CD8-positive, alpha-beta T cell (primary cell): ENCODE measurements at regions of chr7 and their contacts with region 1.

Region 1: GRCh38 chr7:95434557-95435421 is at the start of gene PON2:
- DNase-seq: peak; percentile 9 to 74 (median 37)
- ATAC-seq: peak; percentile 78
- H3K4me3 ChIP-seq: peak within 1 kb of the TSS; percentile 59 to 75
- H3K4me3 Mint-ChIP-seq: peak within 1 kb of the TSS; percentile 90
- H3K27ac ChIP-seq: peak within 1 kb of the TSS; percentile 41 to 53
- H3K27ac Mint-ChIP-seq: peak within 1 kb of the TSS; percentile 90
- H3K4me1 ChIP-seq: peaks cover 8% of the 10 kb centered on the region
- H3K4me1 Mint-ChIP-seq: peaks cover 21% of the 10 kb centered on the region
- H3K27me3 ChIP-seq: no peaks in the 10 kb centered on the region
- H3K27me3 Mint-ChIP-seq: no peaks in the 10 kb centered on the region
- CTCF ChIP-seq: no peak
- total RNA-seq, gene PON2: 8.0 to 9.3 TPM

Region 2: GRCh38 chr7:95102662-95103061 is 332.1 kb before region 1 on chr7:
- CTCF ChIA-PET with region 1: no interaction called
- POLR2A ChIA-PET with region 1: no interaction called
- intact Hi-C with region 1: no loop called
- DNase-seq: no peak
- ATAC-seq: no peak
- H3K4me3 ChIP-seq: no peak overlapping the region
- H3K4me3 Mint-ChIP-seq: no peak overlapping the region
- H3K27ac ChIP-seq: no peak overlapping the region
- H3K27ac Mint-ChIP-seq: no peak overlapping the region
- H3K4me1 ChIP-seq: no peaks in the 10 kb centered on the region
- H3K4me1 Mint-ChIP-seq: no peaks in the 10 kb centered on the region
- H3K27me3 ChIP-seq: no peaks in the 10 kb centered on the region
- H3K27me3 Mint-ChIP-seq: no peaks in the 10 kb centered on the region
- CTCF ChIP-seq: no peak

Region 3: DNA sequence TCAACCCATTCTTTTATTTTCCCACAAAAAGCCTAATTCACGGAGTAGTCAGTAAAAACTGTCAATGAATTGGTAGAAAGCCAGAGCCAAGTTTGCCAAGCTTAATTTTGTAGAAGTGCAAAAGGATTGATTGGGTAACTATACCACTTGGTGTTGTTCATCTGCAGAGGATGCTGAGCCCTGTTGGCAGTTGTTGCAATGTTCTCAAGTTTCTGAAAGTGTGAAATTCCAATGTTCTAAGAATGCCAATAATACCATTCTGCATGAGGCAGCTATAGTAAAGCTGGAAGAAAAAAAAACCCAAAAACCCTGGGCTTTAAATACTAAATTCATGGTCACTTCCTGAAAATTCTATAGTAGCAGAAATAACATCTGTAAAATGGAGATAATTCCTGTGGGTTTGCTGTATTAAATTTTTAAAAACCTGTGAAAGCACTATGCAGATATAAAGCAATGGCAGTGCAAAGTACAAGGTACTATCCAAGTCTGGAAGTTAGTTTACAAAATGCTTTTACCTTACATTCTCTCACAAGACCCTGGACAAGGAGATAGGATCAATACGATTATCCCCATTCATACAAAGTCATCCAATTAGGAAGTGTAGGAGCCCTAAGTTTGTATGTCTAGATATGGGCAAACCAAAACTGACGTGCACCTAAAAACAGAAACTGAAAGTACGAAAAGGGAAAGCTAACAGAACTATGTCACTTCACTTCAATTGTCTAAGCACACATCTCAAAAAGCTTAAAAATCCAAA is 104.4 kb before region 1 on chr7:
- CTCF ChIA-PET with region 1: no interaction called
- POLR2A ChIA-PET with region 1: no interaction called
- intact Hi-C with region 1: loop called in 1 of 2 experiments (anchors 5 kb)
- DNase-seq: peak in 2 of 9 experiments; percentile 39 to 62
- ATAC-seq: peak; percentile 56
- H3K4me3 ChIP-seq: peak overlapping the region; percentile 26 to 41
- H3K4me3 Mint-ChIP-seq: peak overlapping the region; percentile 81
- H3K27ac ChIP-seq: peak overlapping the region in 1 of 2 experiments; percentile 52
- H3K27ac Mint-ChIP-seq: peak overlapping the region; percentile 74
- H3K4me1 ChIP-seq: peaks cover 5% of the 10 kb centered on the region
- H3K4me1 Mint-ChIP-seq: peaks cover 11% of the 10 kb centered on the region
- H3K27me3 ChIP-seq: no peaks in the 10 kb centered on the region
- H3K27me3 Mint-ChIP-seq: peaks cover 5% of the 10 kb centered on the region
- CTCF ChIP-seq: no peak

Region 4: GRCh38 chr7:95491634-95492320 is 57.0 kb after region 1 on chr7:
- CTCF ChIA-PET with region 1: no interaction called
- POLR2A ChIA-PET with region 1: no interaction called
- intact Hi-C with region 1: no loop called
- DNase-seq: no peak
- ATAC-seq: no peak
- H3K4me3 ChIP-seq: no peak overlapping the region
- H3K4me3 Mint-ChIP-seq: no peak overlapping the region
- H3K27ac ChIP-seq: no peak overlapping the region
- H3K27ac Mint-ChIP-seq: no peak overlapping the region
- H3K4me1 ChIP-seq: no peaks in the 10 kb centered on the region
- H3K4me1 Mint-ChIP-seq: no peaks in the 10 kb centered on the region
- H3K27me3 ChIP-seq: no peaks in the 10 kb centered on the region
- H3K27me3 Mint-ChIP-seq: no peaks in the 10 kb centered on the region
- CTCF ChIP-seq: no peak